A549 (cell line): ENCODE measurements at regions of chr19 and their contacts with region 1.

Region 1: GRCh38 chr19:18000935-18001778 is 6.8 kb upstream of the ARRDC2 start:
- DNase-seq: peak; percentile 82 to 94
- ATAC-seq: peak; percentile 67 to 73
- H3K4me3 ChIP-seq: peak overlapping the region; percentile 100
- H3K27ac ChIP-seq: peak overlapping the region; percentile 90 to 93
- H3K4me1 ChIP-seq: peaks cover 29% of the 10 kb centered on the region
- CTCF ChIP-seq: no peak
- EP300 ChIP-seq: peak; percentile 26; a peak in 2 of 5 replicates
- POLR2A ChIP-seq: peak; percentile 51
- RAD21 ChIP-seq: no peak

Region 2: DNA sequence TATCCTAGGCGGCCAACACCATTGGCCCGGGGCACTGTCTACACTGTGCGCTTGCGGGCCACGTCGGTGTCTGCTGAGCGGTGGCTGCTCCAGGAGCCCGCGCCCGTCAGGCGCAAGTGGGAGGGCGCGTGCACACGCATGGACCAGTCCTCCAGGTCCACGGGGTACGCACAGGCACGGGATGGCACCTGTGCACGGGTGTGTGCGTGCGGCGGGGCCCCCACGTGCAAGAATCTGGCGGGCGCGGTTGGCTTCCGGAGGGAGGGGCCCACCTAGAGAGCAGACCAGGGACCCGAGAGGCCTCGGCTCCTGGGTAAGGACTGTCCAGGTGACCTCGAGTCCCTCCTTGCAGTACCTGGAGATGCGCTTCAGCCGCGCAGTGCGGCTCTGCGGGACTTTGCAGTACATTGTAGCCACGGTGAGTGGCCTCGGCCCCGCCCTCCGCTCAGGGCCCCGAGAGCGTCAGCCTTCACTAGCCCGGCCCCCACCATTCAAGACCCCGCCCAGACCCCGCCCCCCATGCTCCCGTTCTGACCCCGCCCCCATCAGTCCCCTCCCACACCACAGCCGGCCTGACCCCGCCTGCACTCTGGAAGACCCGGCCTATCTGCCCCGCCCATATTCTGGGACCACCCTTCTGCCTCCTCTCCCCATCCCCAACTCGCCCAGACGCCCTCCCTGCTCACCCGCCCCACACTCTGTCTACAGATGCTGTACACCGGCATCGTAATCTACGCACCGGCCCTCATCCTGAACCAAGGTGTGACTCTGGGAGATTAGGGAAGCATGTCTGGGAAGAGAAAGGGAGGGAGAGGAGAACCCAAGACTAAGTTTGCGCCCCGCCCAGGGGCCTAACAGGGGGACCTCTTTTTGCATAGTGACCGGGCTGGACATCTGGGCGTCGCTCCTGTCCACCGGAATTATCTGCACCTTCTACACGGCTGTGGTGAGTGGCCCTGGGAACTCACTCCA is 127.1 kb before region 1 on chr19:
- CTCF ChIA-PET with region 1: interaction called, 58 read pairs
- POLR2A ChIA-PET with region 1: interaction called, 3 read pairs
- DNase-seq: peak; percentile 49 to 69
- ATAC-seq: peak; percentile 74 to 81
- H3K4me3 ChIP-seq: peak overlapping the region; percentile 52
- H3K27ac ChIP-seq: peak overlapping the region; percentile 65 to 80
- H3K4me1 ChIP-seq: no peaks in the 10 kb centered on the region
- CTCF ChIP-seq: no peak
- EP300 ChIP-seq: no peak
- POLR2A ChIP-seq: 0 out of 2 replicates have a peak, but pooled peaks have one; percentile 19
- RAD21 ChIP-seq: no peak

Region 3: GRCh38 chr19:17966550-17967256 is 34.5 kb before region 1 on chr19 and contains the start of gene KCNN1:
- CTCF ChIA-PET with region 1: interaction called, 27 read pairs
- POLR2A ChIA-PET with region 1: no interaction called
- DNase-seq: peak in 1 of 2 experiments; percentile 71
- ATAC-seq: peak; percentile 61 to 74; a peak in 4 of 6 replicates
- H3K4me3 ChIP-seq: peak within 1 kb of the TSS; percentile 57
- H3K27ac ChIP-seq: peak within 1 kb of the TSS; percentile 58 to 80; a peak in 4 of 6 replicates
- H3K4me1 ChIP-seq: peaks cover 3% of the 10 kb centered on the region; the same call in 1 of the 3 replicates
- CTCF ChIP-seq: no peak
- EP300 ChIP-seq: no peak
- POLR2A ChIP-seq: no peak
- RAD21 ChIP-seq: no peak
- polyA plus RNA-seq, gene KCNN1: 0.20 and 0.43 TPM in 2 replicates

Region 4: DNA sequence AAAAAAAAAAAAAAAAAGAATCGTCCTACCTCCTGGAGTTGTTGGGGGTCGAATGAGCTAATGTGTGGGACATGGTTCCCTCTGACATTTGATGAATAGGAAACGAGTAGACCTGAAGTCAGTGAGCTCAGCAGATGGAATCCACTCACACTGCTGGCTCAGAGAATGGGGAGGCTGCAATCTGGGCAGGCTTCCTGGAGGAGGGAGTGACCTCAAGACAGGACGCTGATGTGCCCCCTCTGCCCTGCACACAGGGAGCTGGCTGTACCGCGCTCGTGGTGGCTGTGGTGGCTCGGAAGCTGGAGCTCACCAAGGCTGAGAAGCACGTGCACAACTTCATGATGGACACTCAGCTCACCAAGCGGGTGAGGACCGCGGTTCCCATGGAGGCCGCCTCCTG is 13.0 kb before region 1 on chr19:
- CTCF ChIA-PET with region 1: interaction called, 18 read pairs
- POLR2A ChIA-PET with region 1: no interaction called
- DNase-seq: no peak
- ATAC-seq: no peak
- H3K4me3 ChIP-seq: no peak overlapping the region
- H3K27ac ChIP-seq: no peak overlapping the region
- H3K4me1 ChIP-seq: no peaks in the 10 kb centered on the region
- CTCF ChIP-seq: no peak
- EP300 ChIP-seq: no peak
- POLR2A ChIP-seq: no peak
- RAD21 ChIP-seq: no peak

Region 5: GRCh38 chr19:18271433-18271841 is 270.3 kb after region 1 on chr19:
- CTCF ChIA-PET with region 1: no interaction called
- POLR2A ChIA-PET with region 1: no interaction called
- DNase-seq: no peak
- ATAC-seq: no peak; a peak in 1 of 6 replicates
- H3K4me3 ChIP-seq: no peak overlapping the region
- H3K27ac ChIP-seq: no peak overlapping the region
- H3K4me1 ChIP-seq: peaks cover 39% of the 10 kb centered on the region
- CTCF ChIP-seq: no peak
- EP300 ChIP-seq: no peak
- POLR2A ChIP-seq: no peak
- RAD21 ChIP-seq: no peak